Gastrocnemius medialis (tissue), 4 donors: ENCODE measurements at regions of chr20 and their contacts with region 1.

Region 1: DNA sequence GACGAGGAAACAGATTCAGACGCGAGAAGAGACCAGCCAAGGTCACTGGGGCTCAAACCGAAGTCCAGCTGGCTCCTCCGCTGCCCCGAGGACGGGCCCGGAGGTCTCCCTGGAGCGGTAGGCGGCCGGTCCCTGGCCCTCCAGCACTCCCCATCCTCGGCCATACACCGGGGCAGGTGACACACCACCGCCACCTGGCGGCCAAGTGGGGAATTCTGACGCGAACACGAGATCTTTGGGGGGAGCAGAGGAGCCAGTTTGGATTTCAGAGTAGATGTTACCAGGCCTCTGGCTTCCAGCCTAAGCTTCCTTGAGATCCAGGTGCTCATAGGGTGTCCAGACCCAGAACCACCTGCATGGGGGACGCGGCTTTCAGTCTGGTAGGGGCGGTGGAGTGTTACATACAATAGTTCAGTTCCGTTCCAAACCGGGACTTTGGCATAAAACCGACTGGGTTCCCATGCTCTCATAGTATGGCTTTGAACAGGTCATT is 16.1 kb downstream of the BPIFB1 start:
- DNase-seq: peak in 1 of 2 donors; percentile 19
- ATAC-seq: peak; percentile 62 to 64
- H3K4me3 ChIP-seq: no peak overlapping the region
- H3K27ac ChIP-seq: no peak overlapping the region
- H3K4me1 ChIP-seq: no peaks in the 10 kb centered on the region
- H3K27me3 ChIP-seq: peaks cover 0 to 9% (median 0%) of the 10 kb centered on the region in 3 donors
- CTCF ChIP-seq: peak; percentile 46 to 89 (median 80)
- POLR2A ChIP-seq: no peak

Region 2: GRCh38 chr20:32789896-32790750 is 509.0 kb before region 1 on chr20:
- in situ Hi-C with region 1: loop called in 1 of 4 experiments (anchors 25 kb)
- intact Hi-C with region 1: no loop called
- DNase-seq: peak; percentile 39 to 54
- ATAC-seq: peak; percentile 75 to 88
- H3K4me3 ChIP-seq: no peak overlapping the region
- H3K27ac ChIP-seq: no peak overlapping the region
- H3K4me1 ChIP-seq: peaks cover 5 to 15% of the 10 kb centered on the region in 2 donors
- H3K27me3 ChIP-seq: no peaks in the 10 kb centered on the region
- CTCF ChIP-seq: peak; percentile 64 to 98 (median 88)
- POLR2A ChIP-seq: no peak

Region 3: GRCh38 chr20:32902456-32903420 is 396.4 kb before region 1 on chr20:
- in situ Hi-C with region 1: loop called in 3 of 4 experiments (anchors 5 to 25 kb)
- intact Hi-C with region 1: loop called (anchors 2 kb)
- DNase-seq: no peak
- ATAC-seq: peak in 1 of 2 donors; percentile 30
- H3K4me3 ChIP-seq: no peak overlapping the region
- H3K27ac ChIP-seq: no peak overlapping the region
- H3K4me1 ChIP-seq: no peaks in the 10 kb centered on the region
- H3K27me3 ChIP-seq: no peaks in the 10 kb centered on the region
- CTCF ChIP-seq: peak; percentile 58 to 81 (median 78)
- POLR2A ChIP-seq: no peak

Region 4: DNA sequence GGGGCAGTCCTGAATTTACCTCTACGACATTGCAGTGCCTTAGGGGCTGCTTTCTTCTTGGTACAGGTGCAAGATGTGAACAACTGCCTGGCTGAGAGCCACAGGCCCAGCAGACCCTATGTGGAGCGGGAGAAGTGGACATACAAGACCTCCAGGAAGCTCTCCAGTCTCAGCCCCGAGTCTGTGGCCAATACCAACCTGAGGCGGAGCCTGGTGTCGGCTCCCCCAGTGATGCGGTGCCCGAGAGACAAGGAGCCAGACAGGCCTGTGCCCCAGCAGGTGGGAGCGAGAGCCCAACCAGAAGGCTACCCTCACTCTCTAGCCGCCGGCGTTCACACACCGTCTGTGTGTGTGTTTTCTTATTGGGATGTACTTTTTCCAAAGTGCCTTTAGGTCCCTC is 380.9 kb before region 1 on chr20:
- in situ Hi-C with region 1: loop called in 2 of 4 experiments (anchors 10 to 25 kb)
- intact Hi-C with region 1: no loop called
- DNase-seq: no peak
- ATAC-seq: no peak
- H3K4me3 ChIP-seq: no peak overlapping the region
- H3K27ac ChIP-seq: no peak overlapping the region
- H3K4me1 ChIP-seq: no peaks in the 10 kb centered on the region
- H3K27me3 ChIP-seq: no peaks in the 10 kb centered on the region
- CTCF ChIP-seq: no peak
- POLR2A ChIP-seq: no peak

Region 5: DNA sequence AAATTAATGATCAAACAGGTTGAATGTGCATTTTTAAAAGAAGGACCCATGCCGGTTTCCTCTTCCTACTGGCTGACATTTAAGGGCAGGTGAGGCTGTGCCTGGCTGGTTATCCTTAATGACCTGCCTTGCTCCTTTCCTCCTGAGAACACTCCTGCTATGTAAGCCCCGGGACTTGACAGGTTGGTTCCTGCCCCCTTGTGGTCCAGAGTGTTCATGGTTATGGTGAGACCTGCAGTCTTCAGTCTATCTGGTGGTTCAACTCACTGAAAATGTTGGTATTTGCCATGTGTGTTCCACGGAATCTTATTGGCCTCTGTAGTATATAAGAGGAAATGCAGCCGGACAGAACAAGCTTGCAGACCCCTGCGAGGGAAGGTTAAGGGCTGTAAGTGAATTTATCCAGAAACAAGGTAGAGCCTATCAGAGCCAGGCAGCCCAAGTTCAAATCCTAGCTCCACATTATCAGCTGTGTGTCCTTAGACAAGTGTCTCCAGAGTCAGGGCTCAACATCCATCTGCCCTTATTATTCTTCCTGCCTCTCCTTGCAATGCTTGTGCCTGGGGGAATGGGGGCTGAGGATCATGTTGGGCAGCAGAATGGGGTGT is 87.2 kb before region 1 on chr20:
- in situ Hi-C with region 1: loop called in 1 of 4 experiments (anchors 25 kb)
- intact Hi-C with region 1: no loop called
- DNase-seq: no peak
- ATAC-seq: no peak
- H3K4me3 ChIP-seq: no peak overlapping the region
- H3K27ac ChIP-seq: no peak overlapping the region
- H3K4me1 ChIP-seq: no peaks in the 10 kb centered on the region
- H3K27me3 ChIP-seq: peaks cover 0 to 5% (median 4%) of the 10 kb centered on the region in 3 donors
- CTCF ChIP-seq: peak in 1 of 5 experiments; percentile 25
- POLR2A ChIP-seq: no peak